ENCODE measurements at regions of chr16 and their contacts with region 1.

Region 1: DNA sequence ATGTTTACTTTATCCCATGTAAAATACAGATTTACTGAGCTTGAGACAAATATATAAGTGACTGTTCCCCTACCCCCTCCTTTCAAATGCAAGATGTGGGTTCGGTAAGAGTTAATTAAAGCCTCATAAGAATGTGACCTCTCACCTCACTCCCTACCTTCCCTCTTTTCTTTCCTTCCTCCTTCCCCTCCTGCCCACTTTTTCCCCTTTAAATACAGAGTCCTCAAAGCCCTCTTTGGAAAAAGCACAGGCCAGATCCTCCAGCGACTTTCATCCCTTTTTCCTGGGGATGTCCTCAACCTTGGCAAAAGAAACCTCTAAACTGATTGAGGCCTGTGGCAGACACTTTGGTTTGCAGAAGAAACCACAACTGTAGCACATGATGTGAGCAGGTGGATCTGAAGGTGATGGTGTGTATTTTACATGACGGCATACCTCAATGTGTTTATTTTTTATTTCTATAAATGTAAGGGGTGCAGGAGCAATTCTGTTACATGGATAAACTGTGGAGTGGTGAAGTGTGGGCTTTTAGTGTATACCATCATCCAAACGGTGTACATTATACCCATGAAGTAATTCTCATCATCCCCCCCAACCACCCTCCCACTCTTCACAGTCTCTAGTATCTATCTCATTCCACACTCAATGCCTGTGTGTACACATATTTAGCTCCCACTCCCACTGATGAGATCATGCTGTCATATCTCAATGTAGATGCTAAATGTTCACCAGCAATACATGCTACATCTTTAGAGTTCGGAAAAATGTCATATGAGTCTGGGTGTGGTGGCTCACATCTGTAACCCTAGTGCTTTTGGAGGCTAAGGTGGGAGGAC is 77.7 kb downstream of the XYLT1 start:
- DNase-seq: no peak
- ATAC-seq: no peak
- H3K4me3 ChIP-seq: no peak overlapping the region
- H3K4me1 ChIP-seq: peaks cover 21% of the 10 kb centered on the region
- CTCF ChIP-seq: no peak

Region 2: GRCh38 chr16:17273142-17273561 is 119.9 kb before region 1 on chr16:
- intact Hi-C with region 1: loop called in 1 of 2 experiments (anchors 5 kb)
- DNase-seq: no peak
- ATAC-seq: peak; percentile 14
- H3K4me3 ChIP-seq: no peak overlapping the region
- H3K4me1 ChIP-seq: peaks cover 63% of the 10 kb centered on the region
- CTCF ChIP-seq: no peak

Measured in mucosa of descending colon (tissue), 3 donors.